PC-3 (cell line): ENCODE measurements at regions of chr4 and their contacts with region 1.

Region 1: GRCh38 chr4:93791570-93792195 is 36.9 kb upstream of the ATOH1 start:
- DNase-seq: peak; percentile 70
- ATAC-seq: peak; percentile 68
- H3K4me3 ChIP-seq: no peak overlapping the region
- H3K27ac ChIP-seq: no peak overlapping the region
- H3K4me1 ChIP-seq: no peaks in the 10 kb centered on the region
- H3K27me3 ChIP-seq: peaks cover 28% of the 10 kb centered on the region
- CTCF ChIP-seq: peak; percentile 84

Region 2: GRCh38 chr4:94127707-94128328 is 336.1 kb after region 1 on chr4:
- CTCF ChIA-PET with region 1: no interaction called
- POLR2A ChIA-PET with region 1: no interaction called
- intact Hi-C with region 1: loop called (anchors 2 kb)
- DNase-seq: peak; percentile 33
- ATAC-seq: peak; percentile 34; the same call in 1 of the 2 replicates
- H3K4me3 ChIP-seq: no peak overlapping the region
- H3K27ac ChIP-seq: no peak overlapping the region
- H3K4me1 ChIP-seq: no peaks in the 10 kb centered on the region; the same call in 1 of the 2 replicates
- H3K27me3 ChIP-seq: peaks cover 17% of the 10 kb centered on the region
- CTCF ChIP-seq: peak; percentile 67

Region 3: DNA sequence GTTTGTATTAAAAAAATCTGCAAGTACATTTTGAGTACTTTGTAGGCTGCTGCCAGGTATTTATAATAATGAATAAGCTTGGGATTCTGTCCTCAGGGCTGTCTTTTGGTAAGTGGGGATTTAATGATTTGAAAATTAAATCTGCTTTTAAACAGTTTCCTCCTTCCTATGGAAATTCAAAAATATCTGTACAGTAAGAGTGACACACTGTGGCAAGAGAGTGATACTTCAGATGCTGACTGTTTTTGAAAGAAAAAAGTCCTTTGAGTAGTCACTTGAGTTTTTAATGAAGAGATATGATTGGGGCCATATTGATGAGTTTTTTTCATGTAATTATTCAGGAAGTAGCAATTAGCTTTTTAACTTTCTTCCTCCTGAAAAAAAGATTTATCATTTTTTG is 465.1 kb after region 1 on chr4:
- CTCF ChIA-PET with region 1: no interaction called
- POLR2A ChIA-PET with region 1: no interaction called
- intact Hi-C with region 1: loop called (anchors 10 kb)
- DNase-seq: peak; percentile 30
- ATAC-seq: no peak
- H3K4me3 ChIP-seq: no peak overlapping the region
- H3K27ac ChIP-seq: no peak overlapping the region
- H3K4me1 ChIP-seq: no peaks in the 10 kb centered on the region
- H3K27me3 ChIP-seq: no peaks in the 10 kb centered on the region
- CTCF ChIP-seq: peak; percentile 52; the same call in 1 of the 2 replicates

Region 4: GRCh38 chr4:94390804-94391410 is 599.2 kb after region 1 on chr4:
- CTCF ChIA-PET with region 1: no interaction called
- POLR2A ChIA-PET with region 1: no interaction called
- intact Hi-C with region 1: loop called (anchors 5 kb)
- DNase-seq: peak; percentile 44
- ATAC-seq: 0 out of 2 replicates have a peak, but pooled peaks have one; percentile 29
- H3K4me3 ChIP-seq: no peak overlapping the region
- H3K27ac ChIP-seq: no peak overlapping the region
- H3K4me1 ChIP-seq: no peaks in the 10 kb centered on the region
- H3K27me3 ChIP-seq: no peaks in the 10 kb centered on the region
- CTCF ChIP-seq: peak; percentile 75